ENCODE measurements at regions of chr21 and their contacts with region 1.

Region 1: DNA sequence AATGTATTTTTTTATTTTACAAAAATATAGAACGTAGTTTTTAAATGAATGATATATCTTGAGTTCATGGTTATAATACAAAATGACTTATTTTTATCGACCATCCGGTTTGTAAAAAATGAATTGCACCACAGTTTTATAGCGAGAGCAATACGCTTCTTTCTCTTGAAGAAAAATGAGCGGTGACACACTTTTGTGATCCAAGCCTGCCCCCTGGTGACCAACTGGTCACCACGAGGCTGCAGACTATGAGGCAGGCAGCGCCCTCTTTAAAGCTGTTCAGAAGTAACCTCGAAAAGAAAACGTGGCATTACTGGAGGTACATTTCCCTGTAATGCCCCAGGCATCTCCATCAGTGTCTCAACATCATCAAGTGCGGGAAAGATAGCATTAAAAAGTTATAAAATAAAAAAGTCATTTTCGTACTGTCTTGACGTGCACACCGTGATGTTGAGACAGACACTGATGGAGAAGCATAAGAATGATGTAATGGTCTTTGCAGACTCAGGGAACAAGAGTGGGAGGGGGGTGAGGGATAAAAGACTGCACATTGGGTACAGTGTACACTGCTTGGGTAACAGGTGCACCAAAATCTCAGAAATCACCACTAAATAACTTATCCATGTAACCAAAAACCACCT is 734.2 kb upstream of the ADAMTS5 start:
- DNase-seq: peak; percentile 77
- H3K4me3 Mint-ChIP-seq: no peak overlapping the region
- H3K27ac Mint-ChIP-seq: no peak overlapping the region
- H3K4me1 Mint-ChIP-seq: peaks cover 6% of the 10 kb centered on the region
- H3K27me3 Mint-ChIP-seq: no peaks in the 10 kb centered on the region
- CTCF ChIP-seq: peak; percentile 83

Region 2: DNA sequence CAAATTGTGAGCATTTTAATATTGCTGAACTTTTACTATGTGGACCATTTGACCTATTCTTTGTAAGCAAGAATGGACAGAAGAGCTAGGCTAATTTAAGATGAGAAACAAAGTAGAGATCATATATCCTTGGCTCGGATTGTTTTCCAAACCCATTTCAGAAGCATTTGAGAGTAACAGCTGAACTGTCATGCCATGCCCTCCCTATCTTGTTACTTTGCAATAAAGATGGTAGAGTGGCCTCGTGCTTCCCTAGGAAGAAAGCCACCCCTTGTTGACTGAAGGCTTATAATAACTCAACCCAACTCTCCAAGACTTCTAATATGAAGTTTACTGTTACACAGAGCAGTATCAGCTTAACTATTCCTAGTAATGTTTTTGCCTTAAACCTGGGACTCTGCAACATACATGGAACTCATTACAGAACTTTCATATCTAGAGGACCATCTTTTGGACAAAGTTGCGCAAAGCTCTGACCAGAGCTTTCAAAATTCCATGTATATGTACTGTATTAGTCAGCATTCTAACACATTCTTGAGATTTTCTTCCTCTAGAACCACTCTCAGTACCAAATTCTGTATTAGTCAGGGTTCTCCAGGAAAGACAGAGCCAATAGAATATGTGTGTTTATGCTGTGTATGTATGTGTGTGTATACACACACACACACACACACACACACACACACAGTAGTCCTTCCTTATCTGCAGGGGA is 924.6 kb before region 1 on chr21:
- CTCF ChIA-PET with region 1: no interaction called
- intact Hi-C with region 1: loop called (anchors 5 kb)
- DNase-seq: no peak
- H3K4me3 Mint-ChIP-seq: no peak overlapping the region
- H3K27ac Mint-ChIP-seq: no peak overlapping the region
- H3K4me1 Mint-ChIP-seq: peaks cover 15% of the 10 kb centered on the region
- H3K27me3 Mint-ChIP-seq: no peaks in the 10 kb centered on the region
- CTCF ChIP-seq: no peak

Region 3: DNA sequence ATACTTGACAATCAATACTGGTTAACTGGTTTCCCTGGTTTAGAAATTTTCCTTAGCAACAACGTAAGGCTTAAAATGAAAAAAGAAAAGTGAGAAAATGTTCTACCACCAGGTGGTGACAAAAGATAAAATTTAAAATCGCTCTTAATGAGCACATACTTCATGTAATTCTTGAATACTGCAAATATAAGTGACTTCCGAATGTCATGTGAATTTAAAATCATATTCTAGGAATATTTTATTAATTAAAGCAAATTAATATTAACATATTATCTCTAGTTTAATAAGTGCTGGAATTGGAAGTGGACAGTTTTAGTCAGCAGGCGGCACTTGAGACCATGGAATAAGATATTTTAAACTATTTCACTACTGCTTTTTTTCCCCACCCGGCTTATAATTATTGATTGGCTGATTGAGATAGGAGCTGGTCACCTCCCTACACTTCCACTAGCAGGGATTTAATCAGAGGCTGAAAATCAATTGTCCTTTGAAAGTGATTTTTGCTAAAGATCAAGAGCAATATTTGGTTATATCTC is 850.9 kb before region 1 on chr21:
- CTCF ChIA-PET with region 1: interaction called, 4 read pairs
- intact Hi-C with region 1: loop called (anchors 1 kb)
- DNase-seq: no peak
- H3K4me3 Mint-ChIP-seq: no peak overlapping the region
- H3K27ac Mint-ChIP-seq: no peak overlapping the region
- H3K4me1 Mint-ChIP-seq: peaks cover 16% of the 10 kb centered on the region
- H3K27me3 Mint-ChIP-seq: peaks cover 19% of the 10 kb centered on the region
- CTCF ChIP-seq: peak; percentile 49

Measured in Calu3 (cell line).